ENCODE measurements at regions of chr12 and their contacts with region 1.

Region 1: GRCh38 chr12:111868676-111869588 is 26.9 kb downstream of the MAPKAPK5 start:
- DNase-seq: peak in 1 of 2 experiments; percentile 61
- H3K4me3 ChIP-seq: peak overlapping the region in 2 of 4 experiments; percentile 4 to 46; a peak in 3 of 8 replicates
- H3K27ac ChIP-seq: 0 out of 2 replicates have a peak overlapping the region, but pooled peaks have one; percentile 43
- H3K4me1 ChIP-seq: peaks cover 6 to 32% (median 19%) of the 10 kb centered on the region in 4 experiments
- H3K27me3 ChIP-seq: no peaks in the 10 kb centered on the region
- CTCF ChIP-seq: no peak
- EP300 ChIP-seq: no peak
- POLR2A ChIP-seq: no peak
- RAD21 ChIP-seq: no peak

Region 2: GRCh38 chr12:111858778-111859177 is 10.2 kb before region 1 on chr12:
- CTCF ChIA-PET with region 1: interaction called, 4 read pairs
- POLR2A ChIA-PET with region 1: interaction called, 12 read pairs
- DNase-seq: no peak
- H3K4me3 ChIP-seq: no peak overlapping the region
- H3K27ac ChIP-seq: no peak overlapping the region
- H3K4me1 ChIP-seq: peaks cover 0 to 2% (median 0%) of the 10 kb centered on the region in 4 experiments; a peak in 1 of 7 replicates
- H3K27me3 ChIP-seq: no peaks in the 10 kb centered on the region
- CTCF ChIP-seq: no peak
- EP300 ChIP-seq: no peak
- POLR2A ChIP-seq: no peak
- RAD21 ChIP-seq: no peak

Region 3: DNA sequence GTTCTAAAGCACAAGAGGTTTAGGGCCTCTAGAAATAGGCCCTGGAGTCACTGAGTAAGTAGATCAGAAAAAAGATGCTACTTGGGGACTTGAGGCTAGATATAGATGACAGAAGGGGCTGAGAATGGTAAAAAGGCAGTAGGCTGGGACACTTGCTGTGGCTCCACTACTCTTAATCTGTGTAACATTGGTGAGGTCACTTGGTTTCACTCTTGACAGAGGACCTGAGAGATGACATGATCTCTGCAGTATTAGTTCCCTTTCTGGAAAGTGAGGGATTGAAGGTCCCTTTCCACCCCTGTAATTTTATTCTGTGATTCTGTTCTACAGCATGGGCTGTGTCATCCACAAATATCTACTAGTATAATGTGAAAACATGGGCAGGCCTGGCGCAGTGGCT is 12.8 kb after region 1 on chr12:
- CTCF ChIA-PET with region 1: interaction called, 10 read pairs
- POLR2A ChIA-PET with region 1: interaction called, 7 read pairs
- DNase-seq: no peak
- H3K4me3 ChIP-seq: no peak overlapping the region
- H3K27ac ChIP-seq: no peak overlapping the region
- H3K4me1 ChIP-seq: no peaks in the 10 kb centered on the region
- H3K27me3 ChIP-seq: no peaks in the 10 kb centered on the region
- CTCF ChIP-seq: no peak
- EP300 ChIP-seq: no peak
- POLR2A ChIP-seq: no peak
- RAD21 ChIP-seq: no peak

Measured in H1 (cell line).